Adrenal gland (tissue), 19 donors: ENCODE measurements at regions of chr2 and their contacts with region 1.

Region 1: GRCh38 chr2:201466050-201466675 is 14.6 kb downstream of the STRADB start:
- DNase-seq: peak in 3 of 7 donors; percentile 28 to 41 (median 39)
- H3K4me3 ChIP-seq: no peak overlapping the region
- H3K27ac ChIP-seq: peak overlapping the region in 4 of 5 donors; percentile 35 to 86 (median 69)
- H3K4me1 ChIP-seq: peaks cover 5 to 40% of the 10 kb centered on the region in 2 donors
- H3K27me3 ChIP-seq: no peaks in the 10 kb centered on the region
- CTCF ChIP-seq: no peak
- POLR2A ChIP-seq: peak in 1 of 2 donors; percentile 11

Region 2: DNA sequence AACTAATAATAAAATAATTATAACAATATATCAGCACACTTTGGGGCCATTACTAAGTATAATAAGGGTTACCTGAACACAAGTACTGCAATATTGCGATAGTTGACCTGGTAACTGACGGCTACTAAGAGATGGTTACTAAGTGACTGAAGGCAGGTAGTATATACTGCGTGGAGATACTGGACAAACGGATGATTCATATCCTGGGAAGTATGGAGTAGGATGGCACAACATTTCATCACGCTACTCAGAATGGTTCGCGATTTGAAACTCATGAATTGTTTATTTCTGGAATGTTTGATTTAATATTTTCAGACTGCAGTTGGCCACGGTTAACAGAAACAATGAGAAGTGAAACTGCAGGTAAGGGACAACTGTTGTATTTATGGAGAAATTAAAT is 69.6 kb before region 1 on chr2:
- intact Hi-C with region 1: loop called in 1 of 2 experiments (anchors 10 kb)
- DNase-seq: no peak
- H3K4me3 ChIP-seq: no peak overlapping the region
- H3K27ac ChIP-seq: no peak overlapping the region
- H3K4me1 ChIP-seq: no peaks in the 10 kb centered on the region
- H3K27me3 ChIP-seq: no peaks in the 10 kb centered on the region
- CTCF ChIP-seq: no peak
- POLR2A ChIP-seq: no peak

Region 3: GRCh38 chr2:201407265-201407664 is 58.9 kb before region 1 on chr2:
- intact Hi-C with region 1: no loop called
- DNase-seq: no peak
- H3K4me3 ChIP-seq: no peak overlapping the region
- H3K27ac ChIP-seq: peak overlapping the region in 3 of 5 donors; percentile 21 to 63 (median 49)
- H3K4me1 ChIP-seq: peaks cover 13 to 45% of the 10 kb centered on the region in 2 donors
- H3K27me3 ChIP-seq: no peaks in the 10 kb centered on the region
- CTCF ChIP-seq: no peak
- POLR2A ChIP-seq: no peak

Region 4: DNA sequence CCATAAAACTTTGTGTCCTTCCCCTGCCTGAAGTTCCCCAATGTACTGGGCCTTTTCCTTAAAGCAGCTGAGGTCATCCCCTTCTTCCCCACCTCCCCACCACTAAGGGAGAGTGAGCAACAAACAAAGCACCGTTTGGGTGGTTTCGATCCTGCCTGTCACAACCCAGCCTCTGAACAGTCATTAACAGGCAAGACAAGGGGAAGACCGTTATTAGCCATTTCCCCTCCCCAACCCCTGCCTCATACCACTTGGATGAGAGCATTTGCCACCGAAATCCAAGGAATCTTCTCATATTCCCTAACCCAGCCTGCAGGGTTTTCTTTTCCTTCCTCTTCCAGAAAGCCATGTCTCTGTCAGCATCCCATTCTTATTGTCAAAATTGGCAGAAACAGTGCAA is 50.9 kb after region 1 on chr2:
- intact Hi-C with region 1: no loop called
- DNase-seq: no peak
- H3K4me3 ChIP-seq: no peak overlapping the region
- H3K27ac ChIP-seq: no peak overlapping the region
- H3K4me1 ChIP-seq: no peaks in the 10 kb centered on the region
- H3K27me3 ChIP-seq: no peaks in the 10 kb centered on the region
- CTCF ChIP-seq: no peak
- POLR2A ChIP-seq: no peak

Region 5: GRCh38 chr2:201642579-201643215 is 176.5 kb after region 1 on chr2:
- intact Hi-C with region 1: loop called in 1 of 2 experiments (anchors 10 kb)
- DNase-seq: peak; percentile 73 to 91 (median 83)
- H3K4me3 ChIP-seq: peak overlapping the region; percentile 41 to 95 (median 63)
- H3K27ac ChIP-seq: peak overlapping the region; percentile 47 to 96 (median 94)
- H3K4me1 ChIP-seq: peaks cover 5 to 20% of the 10 kb centered on the region in 2 donors
- H3K27me3 ChIP-seq: no peaks in the 10 kb centered on the region
- CTCF ChIP-seq: no peak
- POLR2A ChIP-seq: peak; percentile 65 to 90